ENCODE measurements at regions of chr11 and their contacts with region 1.

Region 1: DNA sequence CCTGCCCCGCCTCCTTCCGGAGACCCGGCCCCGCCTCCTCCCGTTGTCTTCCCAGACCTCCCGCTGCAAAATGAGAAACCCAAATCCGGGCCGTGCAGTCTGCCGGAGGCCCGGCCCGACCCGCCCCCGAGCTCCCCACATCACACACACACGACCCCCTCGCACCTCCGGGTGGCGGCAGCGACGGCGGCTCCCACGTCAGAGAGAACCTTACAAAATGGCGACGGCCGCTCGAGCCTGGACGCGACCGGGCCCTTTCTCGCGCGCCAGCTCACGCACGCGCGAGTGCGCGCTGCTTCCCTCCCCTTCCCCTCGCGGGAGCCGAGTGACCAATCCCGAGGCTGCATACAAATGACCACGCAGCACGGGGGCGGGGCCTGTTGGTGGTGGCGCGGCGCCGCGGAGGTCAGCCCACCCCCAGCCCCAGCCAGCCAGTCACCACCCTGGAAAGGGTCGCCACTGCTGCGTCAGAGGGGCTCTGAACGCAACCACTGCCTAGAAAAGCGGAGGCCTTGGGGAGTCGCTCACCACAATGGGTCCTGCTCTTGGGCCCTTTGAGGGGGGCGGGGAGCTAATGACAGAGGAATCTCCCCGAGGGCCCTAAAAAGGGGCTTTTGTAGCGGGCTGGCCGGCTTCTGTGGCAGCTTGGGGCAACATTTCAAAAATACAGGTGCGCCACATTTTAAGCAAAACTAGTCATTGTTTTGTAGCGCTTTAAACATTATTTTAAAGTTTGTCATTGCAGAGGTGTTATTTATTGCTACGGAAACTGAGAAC is at the start of gene RBM4B:
- DNase-seq: peak; percentile 91 to 99 (median 94)
- ATAC-seq: peak; percentile 78
- H3K4me3 ChIP-seq: peak within 1 kb of the TSS; percentile 92
- H3K4me3 Mint-ChIP-seq: peak within 1 kb of the TSS; percentile 98
- H3K27ac ChIP-seq: peak within 1 kb of the TSS; percentile 98 to 99
- H3K27ac Mint-ChIP-seq: peak within 1 kb of the TSS; percentile 98
- H3K4me1 ChIP-seq: peaks cover 32% of the 10 kb centered on the region
- H3K4me1 Mint-ChIP-seq: peaks cover 49% of the 10 kb centered on the region
- H3K27me3 ChIP-seq: no peaks in the 10 kb centered on the region
- H3K27me3 Mint-ChIP-seq: no peaks in the 10 kb centered on the region
- CTCF ChIP-seq: no peak
- total RNA-seq, gene RBM4B: 3.8 to 5.1 TPM

Region 2: GRCh38 chr11:66408488-66409214 is 269.1 kb before region 1 on chr11:
- CTCF ChIA-PET with region 1: interaction called, 24 read pairs
- POLR2A ChIA-PET with region 1: interaction called, 9 read pairs
- intact Hi-C with region 1: loop called (anchors 1 kb)
- DNase-seq: peak; percentile 84 to 97 (median 93)
- ATAC-seq: peak; percentile 88
- H3K4me3 ChIP-seq: peak overlapping the region; percentile 34
- H3K4me3 Mint-ChIP-seq: peak overlapping the region; percentile 84
- H3K27ac ChIP-seq: no peak overlapping the region
- H3K27ac Mint-ChIP-seq: no peak overlapping the region
- H3K4me1 ChIP-seq: peaks cover 14% of the 10 kb centered on the region
- H3K4me1 Mint-ChIP-seq: peaks cover 5% of the 10 kb centered on the region
- H3K27me3 ChIP-seq: peaks cover 2 to 19% of the 10 kb centered on the region in 2 experiments
- H3K27me3 Mint-ChIP-seq: peaks cover 50% of the 10 kb centered on the region
- CTCF ChIP-seq: peak; percentile 100

Region 3: DNA sequence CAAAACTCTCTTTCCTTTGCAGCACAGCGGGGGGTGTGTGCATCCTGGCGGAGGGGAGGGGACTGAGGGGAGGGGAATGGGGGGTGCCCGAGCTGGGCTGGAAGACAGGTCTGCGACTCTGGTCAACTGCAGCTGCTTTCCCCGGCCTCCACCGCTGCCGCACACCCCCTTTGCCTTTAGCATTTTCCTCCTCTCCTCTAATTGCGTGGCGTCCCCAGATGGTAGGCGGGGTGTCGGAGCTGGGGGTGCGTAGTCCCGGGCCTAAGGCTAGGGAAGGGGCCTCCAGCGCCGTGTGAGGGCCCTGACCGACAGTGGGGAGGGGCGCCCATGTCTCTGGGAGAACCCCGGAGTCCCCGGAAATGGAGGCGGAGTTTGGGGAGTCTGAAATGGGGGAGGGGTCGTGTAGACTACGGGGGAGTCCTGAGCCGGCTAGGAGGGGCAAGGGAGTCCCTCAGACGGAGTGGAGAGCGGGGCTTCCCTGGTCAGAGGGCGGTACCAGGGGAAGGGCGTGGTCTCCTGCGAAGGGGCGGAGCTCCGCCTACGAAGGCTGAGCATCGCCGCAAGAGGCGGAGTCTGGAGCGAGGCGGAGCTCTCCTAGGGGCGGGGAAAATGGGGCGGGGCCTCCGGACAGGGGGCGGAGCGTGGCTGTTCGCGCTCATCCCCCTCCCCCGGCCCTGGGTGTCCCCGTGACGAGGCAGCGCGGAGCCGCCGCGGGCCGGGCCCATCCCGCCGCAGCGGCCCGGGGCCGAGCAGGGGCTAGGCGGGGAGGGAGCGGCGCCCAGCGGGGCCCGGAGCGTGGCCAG is 211.4 kb before region 1 on chr11 and contains the start of gene PELI3:
- CTCF ChIA-PET with region 1: interaction called, 3 read pairs
- POLR2A ChIA-PET with region 1: interaction called, 16 read pairs
- intact Hi-C with region 1: no loop called
- DNase-seq: peak; percentile 92 to 98 (median 95)
- ATAC-seq: peak; percentile 86
- H3K4me3 ChIP-seq: peak within 1 kb of the TSS; percentile 76
- H3K4me3 Mint-ChIP-seq: peak within 1 kb of the TSS; percentile 92
- H3K27ac ChIP-seq: peak within 1 kb of the TSS; percentile 84 to 90
- H3K27ac Mint-ChIP-seq: peak within 1 kb of the TSS; percentile 86
- H3K4me1 ChIP-seq: peaks cover 26% of the 10 kb centered on the region
- H3K4me1 Mint-ChIP-seq: peaks cover 27% of the 10 kb centered on the region
- H3K27me3 ChIP-seq: no peaks in the 10 kb centered on the region
- H3K27me3 Mint-ChIP-seq: no peaks in the 10 kb centered on the region
- CTCF ChIP-seq: no peak
- total RNA-seq, gene PELI3: 20.7 to 23.8 TPM

Region 4: DNA sequence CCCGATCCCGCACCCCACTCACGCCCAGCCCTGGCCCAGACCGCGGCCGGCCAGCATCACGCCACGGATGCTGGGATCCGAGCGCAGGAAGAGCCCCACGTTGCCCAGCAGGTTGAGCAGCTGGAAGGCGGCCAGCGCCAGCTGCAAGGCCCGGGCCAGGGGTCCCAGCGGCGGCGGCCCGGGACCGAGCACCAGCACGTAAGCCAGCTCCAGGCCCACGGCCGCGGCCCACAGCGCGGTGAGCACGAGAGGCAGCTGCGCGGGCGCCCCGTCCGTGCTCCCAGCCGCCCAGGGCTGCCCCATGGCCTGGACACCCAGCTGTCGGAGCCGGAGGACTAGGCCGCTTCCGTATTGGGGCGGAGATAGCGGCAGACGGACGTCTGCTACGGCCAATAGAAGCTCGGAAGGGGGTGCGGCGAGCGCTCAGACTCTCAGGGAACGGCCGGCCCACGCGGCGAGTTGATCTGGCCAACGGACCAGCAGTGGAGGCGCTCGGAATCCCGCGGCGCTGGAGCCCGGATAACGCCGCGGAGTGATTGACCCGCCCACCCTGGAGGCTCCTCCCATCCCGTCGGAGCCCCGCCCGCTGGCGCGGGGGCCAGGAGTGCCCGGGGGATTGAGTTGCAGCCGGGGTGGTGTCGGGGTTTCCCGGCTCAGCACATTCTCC is 132.0 kb before region 1 on chr11 and contains the start of gene ZDHHC24:
- CTCF ChIA-PET with region 1: interaction called, 12 read pairs
- POLR2A ChIA-PET with region 1: interaction called, 22 read pairs
- intact Hi-C with region 1: no loop called
- DNase-seq: peak; percentile 59 to 92 (median 73)
- ATAC-seq: peak; percentile 82
- H3K4me3 ChIP-seq: peak within 1 kb of the TSS; percentile 76
- H3K4me3 Mint-ChIP-seq: peak within 1 kb of the TSS; percentile 90
- H3K27ac ChIP-seq: peak within 1 kb of the TSS; percentile 69 to 70
- H3K27ac Mint-ChIP-seq: peak within 1 kb of the TSS; percentile 75
- H3K4me1 ChIP-seq: peaks cover 44% of the 10 kb centered on the region
- H3K4me1 Mint-ChIP-seq: peaks cover 39% of the 10 kb centered on the region
- H3K27me3 ChIP-seq: no peaks in the 10 kb centered on the region
- H3K27me3 Mint-ChIP-seq: no peaks in the 10 kb centered on the region
- CTCF ChIP-seq: no peak
- total RNA-seq, gene ZDHHC24: 17.0 to 18.4 TPM

Region 5: DNA sequence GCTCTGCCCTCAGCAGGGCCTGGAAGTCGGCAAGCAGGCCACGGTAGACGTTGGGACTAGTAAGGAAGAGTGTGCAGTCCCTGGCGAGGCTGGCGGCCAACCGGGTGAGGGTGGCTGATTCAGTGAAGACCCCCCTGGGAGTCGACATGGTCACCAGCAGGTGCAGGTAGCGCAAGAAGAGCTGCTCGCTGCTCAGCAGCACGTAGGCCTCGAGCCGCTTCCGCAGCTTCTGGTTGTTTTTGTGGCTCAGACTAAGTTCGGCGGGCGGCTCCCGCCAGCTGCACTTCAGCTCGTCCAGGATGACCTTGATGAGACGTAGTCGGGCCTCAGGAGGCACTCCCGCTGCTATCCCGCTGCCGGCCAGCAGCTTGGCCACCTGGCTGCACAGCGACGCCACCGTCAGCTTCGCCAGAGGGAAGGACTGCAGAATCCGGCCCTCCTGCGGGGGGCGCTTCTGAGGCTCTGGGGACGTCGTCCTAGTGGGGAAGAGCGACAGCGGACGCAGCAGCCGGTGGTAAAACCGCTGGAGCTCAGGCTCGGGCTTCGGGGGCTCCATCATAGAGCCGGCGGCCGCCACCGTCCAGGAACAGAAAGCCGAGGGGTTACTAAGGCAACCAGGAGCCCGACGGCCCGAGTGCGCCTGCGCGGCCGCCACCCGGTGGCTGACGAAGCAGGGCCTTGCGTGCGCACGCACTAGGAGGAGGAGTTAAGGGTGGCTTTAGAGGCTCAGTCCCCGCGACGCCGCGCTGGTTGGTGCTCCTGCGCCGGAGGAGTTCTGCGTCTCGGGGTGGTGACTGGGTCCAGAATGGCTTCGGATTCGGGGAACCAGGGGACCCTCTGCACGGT is 85.1 kb before region 1 on chr11 and contains the starts of genes CCDC87 and CCS:
- CTCF ChIA-PET with region 1: interaction called, 47 read pairs
- POLR2A ChIA-PET with region 1: interaction called, 39 read pairs
- intact Hi-C with region 1: loop called in 1 of 2 experiments (anchors 5 kb)
- DNase-seq: peak; percentile 98 to 100 (median 99)
- ATAC-seq: peak; percentile 99
- H3K4me3 ChIP-seq: peak within 1 kb of the TSS; percentile 79
- H3K4me3 Mint-ChIP-seq: peak within 1 kb of the TSS; percentile 98
- H3K27ac ChIP-seq: peak within 1 kb of the TSS; percentile 58 to 81
- H3K27ac Mint-ChIP-seq: peak within 1 kb of the TSS; percentile 85
- H3K4me1 ChIP-seq: peaks cover 39% of the 10 kb centered on the region
- H3K4me1 Mint-ChIP-seq: peaks cover 23% of the 10 kb centered on the region
- H3K27me3 ChIP-seq: no peaks in the 10 kb centered on the region
- H3K27me3 Mint-ChIP-seq: no peaks in the 10 kb centered on the region
- CTCF ChIP-seq: peak; percentile 55
- total RNA-seq, gene CCDC87: 0.22 to 0.25 TPM
- total RNA-seq, gene CCS: 25.4 to 26.3 TPM

Region 6: DNA sequence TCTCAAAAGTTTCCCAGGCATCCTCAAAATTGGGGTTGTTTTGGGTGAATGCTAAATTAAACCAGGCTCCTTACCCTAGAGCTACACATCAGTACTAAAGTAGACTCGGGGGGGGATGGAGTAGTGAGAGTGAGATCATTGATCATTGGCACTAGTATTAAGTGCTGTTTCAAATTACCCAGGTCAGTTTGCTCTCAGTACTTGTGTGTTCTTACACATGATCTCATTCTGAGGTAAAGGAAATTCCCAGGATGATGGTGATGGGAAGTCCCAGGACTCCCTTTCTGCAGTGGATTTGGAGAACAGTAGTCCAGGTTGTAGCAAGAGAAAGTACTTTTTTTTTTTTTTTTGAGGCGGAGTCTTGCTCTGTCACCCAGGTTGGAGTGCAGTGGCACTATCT is 26.8 kb before region 1 on chr11:
- CTCF ChIA-PET with region 1: interaction called, 9 read pairs
- POLR2A ChIA-PET with region 1: interaction called, 18 read pairs
- intact Hi-C with region 1: no loop called
- DNase-seq: peak in 2 of 14 experiments; percentile 35 to 49
- ATAC-seq: no peak
- H3K4me3 ChIP-seq: no peak overlapping the region
- H3K4me3 Mint-ChIP-seq: no peak overlapping the region
- H3K27ac ChIP-seq: no peak overlapping the region
- H3K27ac Mint-ChIP-seq: peak overlapping the region; percentile 64
- H3K4me1 ChIP-seq: peaks cover 38% of the 10 kb centered on the region
- H3K4me1 Mint-ChIP-seq: peaks cover 65% of the 10 kb centered on the region
- H3K27me3 ChIP-seq: no peaks in the 10 kb centered on the region
- H3K27me3 Mint-ChIP-seq: no peaks in the 10 kb centered on the region
- CTCF ChIP-seq: no peak